ENCODE measurements at regions of chr2 and their contacts with region 1.

Region 1: GRCh38 chr2:197705121-197705911 is at the start of gene MARS2:
- DNase-seq: peak; percentile 85 to 92
- ATAC-seq: peak; percentile 95 to 96
- H3K4me3 ChIP-seq: peak within 1 kb of the TSS; percentile 78 to 97 (median 85)
- H3K27ac ChIP-seq: peak within 1 kb of the TSS; percentile 80 to 84 (median 82)
- H3K4me1 ChIP-seq: peaks cover 34 to 43% of the 10 kb centered on the region in 2 donors
- H3K27me3 ChIP-seq: no peaks in the 10 kb centered on the region
- CTCF ChIP-seq: peak in 1 of 5 experiments; percentile 3
- POLR2A ChIP-seq: peak; percentile 56 to 74
- total RNA-seq, gene MARS2: 3.4 to 8.9 (median 7.7) TPM

Region 2: DNA sequence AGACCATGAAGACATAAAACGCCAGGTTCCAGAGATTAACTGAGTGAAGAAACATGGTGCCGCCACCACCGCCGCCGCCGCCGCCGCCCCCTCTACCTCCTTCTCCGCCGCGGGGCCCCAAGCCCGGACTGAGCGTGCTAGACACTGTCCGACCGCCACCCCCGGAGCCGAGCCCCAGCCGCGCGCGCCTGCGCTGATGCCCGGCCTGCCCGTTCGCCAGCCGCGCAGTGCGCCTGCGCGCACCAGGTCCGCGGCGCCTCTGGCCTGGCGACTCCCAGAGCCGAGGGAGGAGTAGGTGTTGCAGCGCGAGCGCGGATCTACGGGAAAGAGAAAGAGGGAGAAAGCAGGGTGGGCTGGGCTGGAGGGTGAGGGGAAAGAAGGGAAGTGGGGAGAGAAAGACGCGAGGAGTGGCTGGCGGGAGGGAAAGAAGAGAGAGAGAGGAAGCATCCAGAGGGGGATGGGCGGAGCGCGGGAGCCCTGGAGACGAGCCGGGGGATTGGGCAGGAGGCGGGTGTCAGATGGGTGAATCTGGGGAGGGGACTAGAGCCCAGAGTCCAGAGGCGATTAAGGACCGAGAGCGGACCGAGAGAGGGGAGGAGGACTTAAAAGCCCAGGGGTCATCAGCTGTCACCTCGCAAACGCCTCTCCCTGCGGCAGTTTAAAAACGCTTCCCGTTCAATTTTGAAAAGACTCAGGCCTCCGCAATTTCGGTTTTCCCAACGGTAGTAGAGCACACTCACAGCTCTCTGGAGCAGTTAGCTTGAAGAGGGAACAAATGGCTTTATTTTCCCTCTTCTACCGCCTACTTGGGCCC is 778.5 kb before region 1 on chr2 and contains the start of gene PGAP1:
- in situ Hi-C with region 1: no loop called
- intact Hi-C with region 1: loop called (anchors 10 kb)
- DNase-seq: peak; percentile 65 to 81
- ATAC-seq: peak; percentile 90 to 91
- H3K4me3 ChIP-seq: peak within 1 kb of the TSS; percentile 78 to 90 (median 84)
- H3K27ac ChIP-seq: peak within 1 kb of the TSS; percentile 82 to 91 (median 84)
- H3K4me1 ChIP-seq: peaks cover 0 to 16% of the 10 kb centered on the region in 2 donors
- H3K27me3 ChIP-seq: no peaks in the 10 kb centered on the region
- CTCF ChIP-seq: no peak
- POLR2A ChIP-seq: peak; percentile 62 to 77
- total RNA-seq, gene PGAP1: 1.3 to 3.7 (median 1.8) TPM

Region 3: GRCh38 chr2:197453161-197453914 is 252.0 kb before region 1 on chr2 and contains the start of gene COQ10B:
- in situ Hi-C with region 1: no loop called
- intact Hi-C with region 1: loop called (anchors 5 kb)
- DNase-seq: peak; percentile 100
- ATAC-seq: peak; percentile 91 to 95
- H3K4me3 ChIP-seq: peak within 1 kb of the TSS; percentile 78 to 94 (median 84)
- H3K27ac ChIP-seq: peak within 1 kb of the TSS; percentile 93 to 100 (median 98)
- H3K4me1 ChIP-seq: peaks cover 11 to 19% of the 10 kb centered on the region in 2 donors
- H3K27me3 ChIP-seq: no peaks in the 10 kb centered on the region
- CTCF ChIP-seq: peak in 4 of 5 experiments; percentile 10 to 52 (median 30)
- POLR2A ChIP-seq: peak; percentile 89 to 91
- total RNA-seq, gene COQ10B: 7.4 to 21.5 (median 13.7) TPM

Region 4: DNA sequence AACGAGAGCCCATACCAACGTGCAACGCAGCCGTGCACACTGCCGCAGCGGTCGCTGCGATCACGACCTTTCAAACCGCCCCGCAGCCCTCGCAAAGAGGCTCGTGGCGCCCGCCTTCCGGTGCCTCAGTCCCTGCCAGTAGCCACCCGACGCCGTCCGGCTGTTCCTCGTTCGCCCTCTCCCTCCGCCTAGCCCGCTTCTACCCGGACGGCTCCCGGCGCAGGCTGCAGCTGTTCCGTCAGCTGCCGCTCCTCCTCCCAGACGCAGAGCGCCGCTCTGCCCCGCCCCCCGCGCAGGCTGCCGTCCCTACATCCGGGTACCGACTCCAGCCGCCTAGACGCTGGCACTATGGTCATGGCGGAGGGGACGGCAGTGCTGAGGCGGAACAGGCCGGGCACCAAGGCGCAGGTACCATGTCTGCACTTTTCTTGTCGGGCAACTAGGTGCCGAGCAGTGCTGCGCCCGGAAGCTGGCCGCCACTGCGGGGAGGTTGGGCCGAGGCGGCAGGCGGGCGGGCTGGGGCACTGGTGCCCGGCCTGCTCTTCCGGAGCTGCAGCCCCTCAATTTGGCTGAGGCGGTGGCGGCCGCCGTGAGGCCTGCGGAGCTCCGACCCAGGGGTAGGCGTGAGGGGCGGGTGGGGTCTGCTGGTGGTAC is 189.4 kb before region 1 on chr2 and contains the start of gene MOB4:
- in situ Hi-C with region 1: loop called in 1 of 4 experiments (anchors 10 kb)
- intact Hi-C with region 1: loop called (anchors 2 kb)
- DNase-seq: peak; percentile 95
- ATAC-seq: peak; percentile 93 to 95
- H3K4me3 ChIP-seq: peak within 1 kb of the TSS; percentile 70 to 100 (median 86)
- H3K27ac ChIP-seq: peak within 1 kb of the TSS; percentile 93 to 100 (median 95)
- H3K4me1 ChIP-seq: peaks cover 19 to 26% of the 10 kb centered on the region in 2 donors
- H3K27me3 ChIP-seq: no peaks in the 10 kb centered on the region
- CTCF ChIP-seq: no peak
- POLR2A ChIP-seq: peak; percentile 95 to 97
- total RNA-seq, gene MOB4: 29.3 to 41.3 (median 38.2) TPM

Region 5: GRCh38 chr2:197786010-197786877 is 80.9 kb after region 1 on chr2:
- in situ Hi-C with region 1: loop called in 2 of 4 experiments (anchors 10 kb)
- intact Hi-C with region 1: loop called (anchors 2 kb)
- DNase-seq: peak; percentile 53 to 81
- ATAC-seq: peak; percentile 93 to 94
- H3K4me3 ChIP-seq: peak overlapping the region; percentile 65 to 86 (median 74)
- H3K27ac ChIP-seq: peak overlapping the region; percentile 80 to 95 (median 90)
- H3K4me1 ChIP-seq: peaks cover 4 to 14% of the 10 kb centered on the region in 2 donors
- H3K27me3 ChIP-seq: no peaks in the 10 kb centered on the region
- CTCF ChIP-seq: peak; percentile 35 to 75 (median 72)
- POLR2A ChIP-seq: peak; percentile 22 to 35

Measured in gastrocnemius medialis (tissue), 4 donors.